A549 (cell line): ENCODE measurements at regions of chr1 and their contacts with region 1.

Region 1: GRCh38 chr1:208132287-208132883 is 111.8 kb downstream of the PLXNA2 start:
- DNase-seq: peak; percentile 78 to 95
- ATAC-seq: peak; percentile 98 to 100
- H3K4me3 ChIP-seq: no peak overlapping the region
- H3K27ac ChIP-seq: peak overlapping the region in 1 of 2 experiments; percentile 33; a peak in 1 of 6 replicates
- H3K4me1 ChIP-seq: peaks cover 10% of the 10 kb centered on the region; the same call in 2 of the 3 replicates
- CTCF ChIP-seq: peak; percentile 90
- EP300 ChIP-seq: no peak
- POLR2A ChIP-seq: no peak
- RAD21 ChIP-seq: peak; percentile 68 to 75

Region 2: DNA sequence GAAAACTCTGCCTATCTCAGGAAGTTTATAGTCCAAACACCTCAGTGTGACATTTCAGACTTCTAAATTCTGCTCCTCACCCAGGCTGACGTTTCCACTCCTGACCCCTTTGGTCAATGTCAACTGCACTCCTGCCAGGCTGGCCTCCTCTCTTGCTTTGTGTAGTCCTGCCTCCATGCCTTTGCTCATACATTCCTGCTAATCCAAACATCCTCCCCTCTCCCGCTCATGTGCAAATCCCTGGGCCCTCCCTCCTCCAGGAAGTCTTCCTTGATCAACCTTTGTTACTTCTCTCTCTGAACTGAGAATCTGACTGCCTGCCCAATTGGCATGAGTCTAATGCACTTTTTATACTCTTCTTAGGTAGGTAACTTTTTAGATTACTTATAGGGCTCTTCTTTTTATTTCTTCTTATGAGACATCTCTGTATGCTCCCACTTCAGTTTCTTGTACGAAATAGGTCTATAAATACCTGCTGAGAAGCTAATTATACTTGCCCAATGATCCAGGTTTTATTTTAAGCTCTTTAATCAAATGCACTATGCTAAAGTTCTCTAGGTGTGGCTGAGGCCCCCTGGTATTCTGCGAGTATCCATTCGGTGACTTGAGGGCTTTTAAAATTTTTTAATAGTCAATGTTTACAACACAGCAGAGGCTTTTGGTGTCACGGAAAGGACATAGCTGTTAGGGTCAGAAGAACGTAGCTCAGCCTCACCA is 16.3 kb before region 1 on chr1:
- CTCF ChIA-PET with region 1: interaction called, 16 read pairs
- POLR2A ChIA-PET with region 1: no interaction called
- DNase-seq: no peak
- ATAC-seq: no peak
- H3K4me3 ChIP-seq: no peak overlapping the region
- H3K27ac ChIP-seq: no peak overlapping the region
- H3K4me1 ChIP-seq: peaks cover 10% of the 10 kb centered on the region
- CTCF ChIP-seq: no peak
- EP300 ChIP-seq: no peak
- POLR2A ChIP-seq: no peak
- RAD21 ChIP-seq: no peak

Region 3: DNA sequence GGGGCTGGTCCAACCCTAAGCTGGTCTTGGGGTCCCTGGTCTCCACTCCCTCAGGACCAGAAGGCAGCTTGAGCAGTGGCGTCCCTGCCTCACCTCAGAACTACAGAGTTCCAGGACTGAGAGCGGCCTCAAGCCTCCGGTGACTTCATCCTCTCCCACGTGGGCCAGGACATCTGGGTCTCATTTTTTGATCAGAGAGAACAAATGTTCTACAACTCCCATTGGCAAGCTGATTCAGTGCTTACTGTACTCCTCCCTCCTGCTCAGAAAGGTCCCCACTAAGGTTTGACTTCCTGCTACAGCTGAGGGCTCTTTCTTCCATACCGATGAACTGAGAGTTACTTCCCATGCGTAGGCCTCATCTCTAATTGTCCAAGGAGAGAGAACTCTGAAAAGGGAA is 33.3 kb after region 1 on chr1:
- CTCF ChIA-PET with region 1: interaction called, 14 read pairs
- POLR2A ChIA-PET with region 1: no interaction called
- DNase-seq: no peak
- ATAC-seq: no peak
- H3K4me3 ChIP-seq: no peak overlapping the region
- H3K27ac ChIP-seq: no peak overlapping the region
- H3K4me1 ChIP-seq: no peaks in the 10 kb centered on the region
- CTCF ChIP-seq: no peak
- EP300 ChIP-seq: no peak
- POLR2A ChIP-seq: no peak
- RAD21 ChIP-seq: no peak

Region 4: DNA sequence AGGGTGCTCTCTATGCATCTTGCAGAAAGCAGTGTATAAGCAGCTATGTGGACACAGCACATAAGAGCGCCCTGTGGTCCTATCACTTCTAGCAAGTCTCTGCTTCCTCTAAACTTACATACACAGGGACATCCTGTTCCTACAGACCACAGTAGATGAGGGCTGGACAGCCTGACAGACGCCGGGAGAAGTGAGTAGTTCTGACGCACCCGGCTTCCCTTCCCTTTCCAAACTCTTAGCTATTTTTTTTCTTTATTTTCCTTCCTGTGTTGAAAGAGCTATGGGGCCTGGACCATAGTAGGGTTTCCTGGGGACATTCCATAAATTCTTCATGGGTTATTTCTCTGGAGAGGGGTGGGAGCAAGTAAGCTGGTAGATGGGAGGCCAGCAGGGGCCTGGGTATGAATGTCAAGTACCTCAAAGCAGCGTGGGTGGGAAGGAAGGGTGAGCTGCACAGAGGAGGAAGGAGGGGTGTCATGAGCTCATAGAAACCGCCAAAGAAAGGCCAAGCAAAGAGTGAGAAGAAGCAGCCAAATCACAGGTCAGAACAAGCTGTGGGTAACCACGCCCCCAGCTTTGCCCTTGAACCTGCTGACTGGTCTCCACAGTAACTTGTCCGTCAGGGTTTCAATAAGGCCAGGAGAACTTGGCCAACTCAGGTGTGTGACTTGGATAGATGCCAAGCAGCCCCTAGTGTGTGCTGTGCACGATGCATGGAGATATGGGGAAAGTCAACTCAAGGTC is 75.2 kb after region 1 on chr1:
- CTCF ChIA-PET with region 1: interaction called, 28 read pairs
- POLR2A ChIA-PET with region 1: interaction called, 3 read pairs
- DNase-seq: no peak
- ATAC-seq: no peak
- H3K4me3 ChIP-seq: no peak overlapping the region
- H3K27ac ChIP-seq: no peak overlapping the region
- H3K4me1 ChIP-seq: peaks cover 23% of the 10 kb centered on the region
- CTCF ChIP-seq: no peak
- EP300 ChIP-seq: no peak
- POLR2A ChIP-seq: no peak
- RAD21 ChIP-seq: no peak